Natural killer cell (primary cell): ENCODE measurements at regions of chr1 and their contacts with region 1.

Region 1: GRCh38 chr1:157739229-157739901 is 37.6 kb downstream of the FCRL2 start:
- DNase-seq: no peak
- ATAC-seq: peak; percentile 15 to 55 (median 30)
- H3K4me3 ChIP-seq: no peak overlapping the region
- H3K4me3 Mint-ChIP-seq: no peak overlapping the region
- H3K27ac ChIP-seq: no peak overlapping the region
- H3K27ac Mint-ChIP-seq: no peak overlapping the region
- H3K4me1 ChIP-seq: peaks cover 16% of the 10 kb centered on the region
- H3K4me1 Mint-ChIP-seq: peaks cover 38 to 47% of the 10 kb centered on the region in 2 donors
- H3K27me3 ChIP-seq: no peaks in the 10 kb centered on the region
- H3K27me3 Mint-ChIP-seq: no peaks in the 10 kb centered on the region
- CTCF ChIP-seq: no peak

Region 2: DNA sequence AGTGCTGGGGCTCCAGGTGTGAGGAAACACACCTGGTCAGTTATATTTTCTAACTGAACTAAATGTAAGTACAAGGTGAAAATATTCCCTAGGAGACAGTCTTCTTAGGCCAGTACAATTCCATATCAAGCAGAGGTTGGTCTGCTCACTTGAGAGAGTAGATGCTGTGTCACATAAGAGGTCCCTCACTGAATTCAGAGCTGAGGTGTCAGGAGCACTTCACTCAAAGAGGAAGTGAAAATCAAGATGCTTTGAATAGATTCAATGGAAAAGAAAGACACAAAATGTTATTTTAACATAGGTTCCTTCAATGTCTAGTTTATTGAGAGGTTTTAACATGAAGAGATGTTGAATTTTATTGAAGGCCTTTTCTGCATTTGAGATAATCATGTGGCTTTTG is 34.5 kb before region 1 on chr1:
- intact Hi-C with region 1: loop called (anchors 5 kb)
- DNase-seq: no peak
- ATAC-seq: no peak
- H3K4me3 ChIP-seq: no peak overlapping the region
- H3K4me3 Mint-ChIP-seq: no peak overlapping the region
- H3K27ac ChIP-seq: peak overlapping the region; percentile 60
- H3K27ac Mint-ChIP-seq: peak overlapping the region; percentile 81 to 84
- H3K4me1 ChIP-seq: peaks cover 28% of the 10 kb centered on the region
- H3K4me1 Mint-ChIP-seq: peaks cover 69 to 71% of the 10 kb centered on the region in 2 donors
- H3K27me3 ChIP-seq: no peaks in the 10 kb centered on the region
- H3K27me3 Mint-ChIP-seq: no peaks in the 10 kb centered on the region
- CTCF ChIP-seq: no peak